Activated CD4-positive, alpha-beta memory T cell treated with anti-CD3 and anti-CD28 coated beads for 36 hours (primary cell): ENCODE measurements at regions of chr4 and their contacts with region 1.

Region 1: DNA sequence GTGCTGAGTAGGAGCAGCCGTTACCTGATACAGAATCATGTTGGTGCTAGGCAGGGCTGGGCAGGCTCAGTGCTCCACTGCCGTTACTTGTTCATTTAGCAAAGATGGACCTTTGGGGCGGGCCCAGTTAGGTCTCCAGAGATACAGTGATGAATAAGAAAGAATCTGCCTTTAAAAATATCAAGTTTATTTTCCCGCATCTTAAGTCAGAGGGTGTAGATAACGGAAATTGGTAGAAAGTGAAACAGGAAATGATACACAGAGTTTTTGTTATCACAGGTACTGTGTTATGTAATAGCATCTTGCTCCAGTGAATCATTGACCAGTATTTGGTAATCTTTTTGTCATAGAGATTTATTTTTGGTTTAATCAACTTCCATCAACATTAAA is 5.5 kb downstream of the TMEM131L start:
- DNase-seq: peak; percentile 68
- H3K4me3 Mint-ChIP-seq: peak overlapping the region; percentile 59
- H3K27ac Mint-ChIP-seq: peak overlapping the region; percentile 77
- H3K4me1 Mint-ChIP-seq: peaks cover 69% of the 10 kb centered on the region
- H3K27me3 Mint-ChIP-seq: no peaks in the 10 kb centered on the region

Region 2: DNA sequence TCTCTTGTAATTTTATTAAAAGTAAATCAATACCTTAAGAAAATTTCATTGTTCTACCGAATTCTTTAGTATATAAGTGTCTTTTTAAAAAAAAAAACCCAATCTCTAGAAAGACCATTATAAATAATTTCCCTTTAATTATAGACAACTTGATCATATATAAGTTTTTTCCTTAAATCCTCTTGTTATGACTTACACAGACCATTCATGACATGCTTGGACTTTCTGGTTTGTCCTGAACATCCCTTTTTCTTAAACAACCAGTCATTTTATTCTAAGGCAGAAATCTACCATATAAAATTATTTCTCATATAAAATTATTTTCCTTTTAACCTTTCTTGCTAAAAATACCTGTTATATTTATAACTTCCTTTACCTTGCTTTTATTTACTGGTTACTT is 550.9 kb before region 1 on chr4:
- CTCF ChIA-PET with region 1: no interaction called
- POLR2A ChIA-PET with region 1: no interaction called
- intact Hi-C with region 1: no loop called
- DNase-seq: no peak
- H3K4me3 Mint-ChIP-seq: no peak overlapping the region
- H3K27ac Mint-ChIP-seq: no peak overlapping the region
- H3K4me1 Mint-ChIP-seq: no peaks in the 10 kb centered on the region
- H3K27me3 Mint-ChIP-seq: no peaks in the 10 kb centered on the region

Region 3: DNA sequence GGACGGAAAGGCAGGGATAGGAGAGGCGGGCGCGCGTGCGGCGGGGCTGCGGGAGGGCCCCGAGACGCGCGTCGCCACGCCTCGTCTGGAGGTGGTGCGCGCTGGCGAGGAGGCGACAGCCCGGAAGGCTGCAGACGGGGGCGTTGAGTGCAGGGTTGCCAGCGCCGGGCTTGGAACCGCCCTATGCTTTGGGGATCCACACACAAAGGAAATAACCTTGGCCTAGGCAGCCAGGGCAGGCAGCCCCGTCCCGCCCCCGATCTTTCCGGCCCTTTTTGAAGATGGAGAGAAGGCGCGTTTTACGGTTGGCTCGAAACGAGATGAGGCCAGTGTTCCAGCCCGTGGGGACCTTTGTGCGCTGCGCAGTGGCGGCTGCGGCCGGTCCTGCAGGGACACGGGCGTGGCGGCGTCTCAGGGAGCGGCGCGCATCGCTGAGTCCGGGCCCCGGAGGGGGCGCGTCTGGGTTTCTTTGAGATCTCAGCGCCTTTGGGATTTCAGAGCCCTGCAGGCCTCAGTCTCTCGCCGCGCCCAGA is 318.3 kb before region 1 on chr4:
- CTCF ChIA-PET with region 1: no interaction called
- POLR2A ChIA-PET with region 1: no interaction called
- intact Hi-C with region 1: loop called (anchors 2 kb)
- DNase-seq: peak; percentile 89
- H3K4me3 Mint-ChIP-seq: peak overlapping the region; percentile 78
- H3K27ac Mint-ChIP-seq: peak overlapping the region; percentile 83
- H3K4me1 Mint-ChIP-seq: peaks cover 53% of the 10 kb centered on the region
- H3K27me3 Mint-ChIP-seq: peaks cover 2% of the 10 kb centered on the region

Region 4: GRCh38 chr4:153393397-153393796 is 78.3 kb before region 1 on chr4:
- CTCF ChIA-PET with region 1: no interaction called
- POLR2A ChIA-PET with region 1: no interaction called
- intact Hi-C with region 1: no loop called
- DNase-seq: no peak
- H3K4me3 Mint-ChIP-seq: no peak overlapping the region
- H3K27ac Mint-ChIP-seq: no peak overlapping the region
- H3K4me1 Mint-ChIP-seq: peaks cover 1% of the 10 kb centered on the region
- H3K27me3 Mint-ChIP-seq: no peaks in the 10 kb centered on the region

Region 5: GRCh38 chr4:153432968-153433753 is 38.5 kb before region 1 on chr4:
- CTCF ChIA-PET with region 1: interaction called, 15 read pairs
- POLR2A ChIA-PET with region 1: interaction called, 3 read pairs
- intact Hi-C with region 1: loop called (anchors 1 kb)
- DNase-seq: peak; percentile 88
- H3K4me3 Mint-ChIP-seq: peak overlapping the region; percentile 77
- H3K27ac Mint-ChIP-seq: peak overlapping the region; percentile 74
- H3K4me1 Mint-ChIP-seq: peaks cover 52% of the 10 kb centered on the region
- H3K27me3 Mint-ChIP-seq: no peaks in the 10 kb centered on the region

Region 6: DNA sequence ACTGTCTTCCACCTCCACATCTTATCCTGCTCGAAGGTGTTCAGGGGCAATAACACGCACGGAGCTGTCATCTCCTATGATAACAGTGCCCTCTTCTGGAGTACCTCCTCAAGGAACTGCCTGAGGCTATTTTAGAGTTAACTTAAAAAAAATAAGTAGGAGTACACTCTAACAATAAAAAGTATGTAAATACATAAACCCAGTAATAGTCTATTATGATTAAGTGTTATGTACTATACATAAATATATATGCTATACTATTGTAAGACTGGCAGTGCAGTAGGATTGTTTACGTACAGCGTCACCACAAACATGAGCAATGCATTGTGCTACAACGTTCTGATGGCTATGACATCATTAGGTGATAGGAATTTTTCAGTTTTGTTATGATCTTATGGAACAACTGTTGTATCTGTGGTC is 177.9 kb after region 1 on chr4:
- CTCF ChIA-PET with region 1: interaction called, 4 read pairs
- POLR2A ChIA-PET with region 1: no interaction called
- intact Hi-C with region 1: loop called (anchors 5 kb)
- DNase-seq: no peak
- H3K4me3 Mint-ChIP-seq: no peak overlapping the region
- H3K27ac Mint-ChIP-seq: no peak overlapping the region
- H3K4me1 Mint-ChIP-seq: peaks cover 36% of the 10 kb centered on the region
- H3K27me3 Mint-ChIP-seq: no peaks in the 10 kb centered on the region